Caco-2 (cell line): ENCODE measurements at regions of chr17 and their contacts with region 1.

Region 1: DNA sequence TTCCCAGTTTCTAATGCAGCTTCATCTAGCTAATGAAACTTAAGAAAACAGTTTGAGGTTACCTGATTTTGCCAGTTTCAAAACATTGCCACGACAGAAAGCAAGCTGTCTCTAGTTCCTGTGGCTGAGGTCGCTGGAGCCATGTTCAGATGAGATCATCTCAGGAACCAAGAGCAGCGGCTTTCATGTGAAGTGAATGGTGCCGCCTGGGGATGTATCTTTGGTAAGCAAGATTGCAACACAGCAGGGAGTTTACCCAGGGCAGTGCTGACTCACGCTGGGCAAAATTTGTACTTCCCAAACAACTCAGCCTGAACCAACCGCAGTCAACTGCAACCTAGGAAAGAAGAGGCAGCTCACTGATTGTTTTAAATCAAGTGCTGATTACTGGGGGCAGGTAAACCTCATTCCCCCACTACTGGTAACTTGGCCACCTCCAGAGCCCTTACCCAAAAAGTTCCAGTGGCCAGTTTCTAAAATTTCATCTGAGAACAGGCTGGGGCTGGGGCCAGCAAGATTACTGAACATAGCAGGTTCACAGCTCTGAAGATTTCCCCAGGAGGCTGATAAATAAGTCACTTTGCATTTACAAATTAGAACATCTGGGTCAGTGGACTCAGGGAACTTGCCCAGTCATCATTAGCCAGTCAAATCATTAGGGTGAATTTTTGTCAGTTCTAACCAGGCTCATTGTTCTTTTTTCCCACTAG is at the start of gene RFFL:
- DNase-seq: peak; percentile 91 to 94
- H3K4me3 ChIP-seq: peak within 1 kb of the TSS; percentile 1; the same call in 1 of the 2 replicates
- H3K4me3 Mint-ChIP-seq: peak within 1 kb of the TSS; percentile 49
- H3K27ac Mint-ChIP-seq: peak within 1 kb of the TSS; percentile 75
- H3K4me1 ChIP-seq: peaks cover 27% of the 10 kb centered on the region
- H3K4me1 Mint-ChIP-seq: peaks cover 21% of the 10 kb centered on the region
- H3K27me3 ChIP-seq: no peaks in the 10 kb centered on the region
- H3K27me3 Mint-ChIP-seq: no peaks in the 10 kb centered on the region
- CTCF ChIP-seq: peak; percentile 16 to 31
- total RNA-seq, gene RFFL: 27.9 and 29.6 TPM in 2 replicates

Region 2: DNA sequence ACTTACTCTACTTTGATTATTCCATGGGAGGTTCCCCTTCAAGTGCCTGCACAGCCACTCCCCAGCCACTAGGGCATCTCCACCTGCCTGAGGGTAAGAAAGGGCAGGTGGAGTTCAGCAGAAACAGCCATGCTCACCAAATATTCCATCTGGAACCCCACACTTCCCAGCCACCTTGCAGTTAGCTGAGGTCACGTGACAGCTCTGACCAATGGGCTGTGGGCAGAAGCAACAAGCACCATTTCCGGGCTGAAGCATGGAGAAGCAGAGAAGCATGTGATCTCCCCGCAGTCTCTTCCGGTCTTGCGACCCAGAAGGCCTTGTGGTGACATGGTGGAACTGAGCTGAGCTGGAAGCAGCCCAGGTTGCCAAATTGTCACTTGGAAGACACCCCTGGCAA is 211.1 kb before region 1 on chr17:
- CTCF ChIA-PET with region 1: no interaction called
- POLR2A ChIA-PET with region 1: no interaction called
- intact Hi-C with region 1: no loop called
- DNase-seq: peak in 1 of 2 experiments; percentile 17
- H3K4me3 ChIP-seq: no peak overlapping the region
- H3K4me3 Mint-ChIP-seq: no peak overlapping the region
- H3K27ac Mint-ChIP-seq: no peak overlapping the region
- H3K4me1 ChIP-seq: no peaks in the 10 kb centered on the region
- H3K4me1 Mint-ChIP-seq: no peaks in the 10 kb centered on the region
- H3K27me3 ChIP-seq: no peaks in the 10 kb centered on the region
- H3K27me3 Mint-ChIP-seq: peaks cover 15% of the 10 kb centered on the region
- CTCF ChIP-seq: no peak

Region 3: GRCh38 chr17:34998205-34998604 is 65.5 kb before region 1 on chr17:
- CTCF ChIA-PET with region 1: no interaction called
- POLR2A ChIA-PET with region 1: no interaction called
- intact Hi-C with region 1: loop called (anchors 1 kb)
- DNase-seq: peak; percentile 78 to 84
- H3K4me3 ChIP-seq: no peak overlapping the region
- H3K4me3 Mint-ChIP-seq: no peak overlapping the region
- H3K27ac Mint-ChIP-seq: no peak overlapping the region
- H3K4me1 ChIP-seq: no peaks in the 10 kb centered on the region
- H3K4me1 Mint-ChIP-seq: no peaks in the 10 kb centered on the region
- H3K27me3 ChIP-seq: no peaks in the 10 kb centered on the region
- H3K27me3 Mint-ChIP-seq: no peaks in the 10 kb centered on the region
- CTCF ChIP-seq: peak; percentile 86 to 97